ENCODE measurements at regions of chr19 and their contacts with region 1.

Region 1: GRCh38 chr19:8334458-8335342 is 8.4 kb downstream of the KANK3 start:
- DNase-seq: peak in 1 of 2 experiments; percentile 83
- H3K4me3 ChIP-seq: peak overlapping the region; percentile 38 to 56 (median 43)
- H3K27ac ChIP-seq: no peak overlapping the region
- H3K4me1 ChIP-seq: peaks cover 0 to 18% (median 10%) of the 10 kb centered on the region in 4 experiments; a peak in 6 of 7 replicates
- H3K27me3 ChIP-seq: peaks cover 21 to 38% (median 33%) of the 10 kb centered on the region in 4 experiments
- CTCF ChIP-seq: no peak
- EP300 ChIP-seq: no peak
- POLR2A ChIP-seq: no peak
- RAD21 ChIP-seq: no peak

Region 2: GRCh38 chr19:8321060-8321985 is 13.4 kb before region 1 on chr19 and contains the starts of genes NDUFA7 and RPS28:
- CTCF ChIA-PET with region 1: interaction called, 32 read pairs
- POLR2A ChIA-PET with region 1: interaction called, 583 read pairs
- DNase-seq: peak; percentile 87 to 99
- H3K4me3 ChIP-seq: peak within 1 kb of the TSS; percentile 90 to 98 (median 97)
- H3K27ac ChIP-seq: peak within 1 kb of the TSS; percentile 91
- H3K4me1 ChIP-seq: peaks cover 0 to 17% (median 9%) of the 10 kb centered on the region in 4 experiments; a peak in 6 of 7 replicates
- H3K27me3 ChIP-seq: no peaks in the 10 kb centered on the region
- CTCF ChIP-seq: peak in 1 of 3 experiments; percentile 18; a peak in 1 of 4 replicates
- EP300 ChIP-seq: 0 out of 3 replicates have a peak, but pooled peaks of 1 of the 2 experiments have one; percentile 50
- POLR2A ChIP-seq: peak; percentile 83 to 98
- RAD21 ChIP-seq: peak; percentile 19 to 41; a peak in 2 of 4 replicates
- total RNA-seq, gene NDUFA7: 51.6 and 54.4 TPM in 2 replicates
- total RNA-seq, gene RPS28: 1,699 and 1,856 TPM in 2 replicates

Region 3: DNA sequence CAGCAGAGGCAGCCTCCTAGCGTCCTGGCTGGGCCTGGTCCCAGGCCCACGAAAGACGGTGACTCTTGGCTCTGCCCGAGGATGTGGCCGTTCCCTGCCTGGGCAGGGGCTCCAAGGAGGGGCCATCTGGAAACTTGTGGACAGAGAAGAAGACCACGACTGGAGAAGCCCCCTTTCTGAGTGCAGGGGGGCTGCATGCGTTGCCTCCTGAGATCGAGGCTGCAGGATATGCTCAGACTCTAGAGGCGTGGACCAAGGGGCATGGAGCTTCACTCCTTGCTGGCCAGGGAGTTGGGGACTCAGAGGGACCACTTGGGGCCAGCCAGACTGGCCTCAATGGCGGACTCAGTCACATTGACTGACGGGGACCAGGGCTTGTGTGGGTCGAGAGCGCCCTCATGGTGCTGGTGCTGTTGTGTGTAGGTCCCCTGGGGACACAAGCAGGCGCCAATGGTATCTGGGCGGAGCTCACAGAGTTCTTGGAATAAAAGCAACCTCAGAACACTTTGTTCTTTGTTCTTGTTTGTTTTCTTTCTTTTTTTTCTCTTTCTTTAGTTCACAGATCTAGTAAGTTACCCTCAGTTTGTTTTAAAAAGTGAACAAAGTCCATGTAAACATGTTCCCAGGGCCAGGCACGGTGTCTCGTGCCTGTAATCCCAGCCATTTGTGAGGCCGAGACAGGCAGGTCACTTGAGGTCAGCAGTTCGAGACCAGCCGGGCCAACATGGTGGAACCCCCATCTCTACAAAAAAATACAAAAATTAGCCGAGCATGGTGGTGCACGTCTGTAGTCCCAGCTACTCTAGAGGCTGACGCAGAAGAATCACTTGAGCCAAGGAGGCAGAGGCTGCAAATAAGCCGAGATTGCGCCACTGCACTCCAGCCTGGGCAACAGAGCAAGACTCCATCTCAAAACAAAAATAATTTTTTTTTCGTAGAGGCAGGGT is 39.4 kb after region 1 on chr19:
- CTCF ChIA-PET with region 1: no interaction called
- POLR2A ChIA-PET with region 1: no interaction called
- DNase-seq: no peak
- H3K4me3 ChIP-seq: no peak overlapping the region
- H3K27ac ChIP-seq: no peak overlapping the region
- H3K4me1 ChIP-seq: no peaks in the 10 kb centered on the region
- H3K27me3 ChIP-seq: no peaks in the 10 kb centered on the region
- CTCF ChIP-seq: peak in 2 of 3 experiments; percentile 24 to 31; a peak in 2 of 4 replicates
- EP300 ChIP-seq: no peak
- POLR2A ChIP-seq: no peak
- RAD21 ChIP-seq: peak; percentile 30 to 52; a peak in 3 of 4 replicates

Measured in H1 (cell line).